Gastrocnemius medialis (tissue), 4 donors: ENCODE measurements at regions of chr12 and their contacts with region 1.

Region 1: GRCh38 chr12:94133964-94134795 is 14.2 kb upstream of the PLXNC1 start:
- DNase-seq: no peak
- ATAC-seq: peak; percentile 82 to 83
- H3K4me3 ChIP-seq: no peak overlapping the region
- H3K27ac ChIP-seq: no peak overlapping the region
- H3K4me1 ChIP-seq: no peaks in the 10 kb centered on the region
- H3K27me3 ChIP-seq: peaks cover 0 to 3% (median 0%) of the 10 kb centered on the region in 3 donors
- CTCF ChIP-seq: peak; percentile 46 to 81 (median 57)
- POLR2A ChIP-seq: no peak

Region 2: GRCh38 chr12:94427501-94428381 is 293.6 kb after region 1 on chr12:
- in situ Hi-C with region 1: loop called in 2 of 4 experiments (anchors 10 to 25 kb)
- intact Hi-C with region 1: no loop called
- DNase-seq: peak in 1 of 2 donors; percentile 4
- ATAC-seq: peak in 1 of 2 donors; percentile 39
- H3K4me3 ChIP-seq: no peak overlapping the region
- H3K27ac ChIP-seq: peak overlapping the region in 3 of 4 donors; percentile 10 to 32 (median 21)
- H3K4me1 ChIP-seq: peaks cover 8 to 12% of the 10 kb centered on the region in 2 donors
- H3K27me3 ChIP-seq: no peaks in the 10 kb centered on the region
- CTCF ChIP-seq: no peak
- POLR2A ChIP-seq: no peak

Region 3: GRCh38 chr12:94435511-94435927 is 301.3 kb after region 1 on chr12:
- in situ Hi-C with region 1: loop called in 2 of 4 experiments (anchors 10 to 25 kb)
- intact Hi-C with region 1: no loop called
- DNase-seq: no peak
- ATAC-seq: peak; percentile 30 to 41
- H3K4me3 ChIP-seq: no peak overlapping the region
- H3K27ac ChIP-seq: no peak overlapping the region
- H3K4me1 ChIP-seq: peaks cover 10 to 13% of the 10 kb centered on the region in 2 donors
- H3K27me3 ChIP-seq: no peaks in the 10 kb centered on the region
- CTCF ChIP-seq: no peak
- POLR2A ChIP-seq: no peak

Region 4: GRCh38 chr12:94560431-94561221 is 426.4 kb after region 1 on chr12:
- in situ Hi-C with region 1: no loop called
- intact Hi-C with region 1: no loop called
- DNase-seq: no peak
- ATAC-seq: peak in 1 of 2 donors; percentile 14
- H3K4me3 ChIP-seq: no peak overlapping the region
- H3K27ac ChIP-seq: no peak overlapping the region
- H3K4me1 ChIP-seq: peaks cover 8 to 18% of the 10 kb centered on the region in 2 donors
- H3K27me3 ChIP-seq: no peaks in the 10 kb centered on the region
- CTCF ChIP-seq: no peak
- POLR2A ChIP-seq: no peak